OCI-LY7 (cell line): ENCODE measurements at regions of chr6 and their contacts with region 1.

Region 1: DNA sequence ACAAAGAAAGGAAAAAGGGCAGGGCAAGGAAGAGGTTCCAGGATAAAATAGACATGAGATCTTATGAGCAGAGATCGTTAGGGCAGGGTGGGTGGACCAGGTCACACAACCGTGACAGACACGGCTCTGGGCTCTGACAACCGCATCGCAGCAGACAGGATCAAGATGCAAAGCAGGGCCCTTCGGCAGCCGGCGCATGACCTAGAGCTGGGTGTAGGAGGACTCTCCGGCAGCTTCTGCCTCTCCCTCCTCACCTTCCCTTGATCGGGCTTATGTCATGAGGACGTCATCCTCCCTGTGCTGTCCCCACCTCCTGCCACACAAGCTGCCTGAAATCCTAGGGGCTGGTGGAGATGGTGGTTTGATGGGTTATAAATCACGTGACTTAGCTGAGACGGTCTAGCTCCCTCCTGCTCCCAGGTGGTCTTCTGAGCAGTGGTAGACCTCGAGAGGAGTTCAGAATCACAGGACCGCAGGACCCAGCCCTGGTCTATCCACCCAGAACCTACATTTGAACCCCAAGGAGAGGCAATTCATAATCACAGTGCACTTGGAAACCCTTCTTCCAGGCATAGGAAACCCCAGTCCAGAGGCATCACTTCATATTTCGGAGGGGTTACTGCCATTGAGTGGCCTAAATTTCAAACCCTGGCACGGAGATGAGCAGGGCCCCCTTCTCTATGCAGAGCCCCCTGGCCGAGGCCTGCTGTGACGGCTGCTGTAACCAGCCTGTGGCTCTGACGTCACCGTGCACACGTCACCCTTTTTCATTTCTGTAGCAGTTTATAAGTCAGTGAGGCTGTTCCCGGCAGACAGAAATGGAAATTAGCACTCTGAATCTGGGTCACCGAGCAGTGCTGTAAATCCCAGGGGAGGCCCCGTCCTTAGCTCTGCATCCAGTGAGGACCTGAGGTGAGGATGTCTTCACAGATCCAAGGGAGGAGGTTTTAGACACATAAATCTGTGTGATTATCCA is 8.7 kb upstream of the CCR6 start:
- DNase-seq: peak; percentile 96
- H3K4me3 ChIP-seq: peak overlapping the region; percentile 44
- H3K27ac ChIP-seq: peak overlapping the region; percentile 92
- H3K4me1 ChIP-seq: peaks cover 84% of the 10 kb centered on the region
- CTCF ChIP-seq: no peak

Region 2: DNA sequence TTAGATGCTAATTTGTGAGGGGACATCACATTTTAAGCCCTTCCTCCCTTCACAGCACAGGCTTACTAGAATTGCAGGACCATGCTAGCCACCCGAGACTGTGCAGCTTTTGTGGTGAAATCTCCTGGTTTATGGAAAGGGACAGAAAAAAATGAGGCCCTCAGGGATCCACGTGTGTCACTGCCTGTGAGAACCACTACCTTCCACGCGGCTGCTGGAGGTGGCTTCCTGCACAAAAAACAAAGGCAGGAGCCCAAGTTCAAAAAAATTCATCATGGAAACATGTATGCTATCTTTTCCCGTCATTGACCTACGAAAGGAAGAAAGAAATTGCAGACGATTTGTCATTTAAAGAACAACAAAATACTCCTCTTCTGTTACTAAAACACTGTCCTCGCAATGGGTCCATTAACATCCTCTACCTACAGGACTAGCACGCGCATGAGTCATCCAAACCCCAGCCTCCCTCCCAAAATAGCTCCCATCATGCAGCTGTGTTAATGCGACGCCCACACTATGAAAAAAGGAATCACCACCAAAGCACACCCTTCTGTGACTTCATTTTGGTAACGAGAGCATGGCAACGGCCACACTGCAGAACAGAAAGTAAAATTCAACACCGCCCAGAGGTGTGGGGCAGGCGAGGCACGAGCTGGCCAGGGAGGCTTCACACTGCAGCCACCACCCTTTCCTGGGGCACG is 573.4 kb before region 1 on chr6:
- CTCF ChIA-PET with region 1: no interaction called
- POLR2A ChIA-PET with region 1: no interaction called
- intact Hi-C with region 1: no loop called
- DNase-seq: no peak
- H3K4me3 ChIP-seq: no peak overlapping the region
- H3K27ac ChIP-seq: no peak overlapping the region
- H3K4me1 ChIP-seq: no peaks in the 10 kb centered on the region
- CTCF ChIP-seq: no peak

Region 3: DNA sequence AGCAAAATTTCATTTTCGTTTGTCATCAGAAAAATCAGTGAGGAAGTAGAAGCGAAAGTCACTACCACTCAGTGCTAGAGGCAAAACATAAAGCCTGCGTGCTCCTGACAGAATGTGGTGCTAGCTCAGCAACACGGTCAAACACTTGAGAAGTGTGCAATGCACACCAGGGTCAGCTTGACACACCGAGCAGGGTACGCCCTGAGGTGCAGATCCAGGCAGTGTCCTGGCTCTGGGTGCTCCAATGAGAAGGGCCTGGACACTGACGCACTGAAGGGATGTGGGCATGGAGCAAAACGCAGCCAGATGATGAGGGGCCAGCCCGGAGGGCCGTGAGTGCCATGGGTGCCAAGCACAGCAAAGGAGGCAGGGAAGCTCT is 163.8 kb before region 1 on chr6:
- CTCF ChIA-PET with region 1: interaction called, 3 read pairs
- POLR2A ChIA-PET with region 1: interaction called, 7 read pairs
- intact Hi-C with region 1: loop called (anchors 2 kb)
- DNase-seq: peak; percentile 66
- H3K4me3 ChIP-seq: peak overlapping the region; percentile 64
- H3K27ac ChIP-seq: peak overlapping the region; percentile 87
- H3K4me1 ChIP-seq: peaks cover 60% of the 10 kb centered on the region
- CTCF ChIP-seq: no peak

Region 4: GRCh38 chr6:166999145-166999883 is 114.9 kb before region 1 on chr6 and contains the start of gene CEP43:
- CTCF ChIA-PET with region 1: no interaction called
- POLR2A ChIA-PET with region 1: interaction called, 8 read pairs
- intact Hi-C with region 1: loop called (anchors 1 kb)
- DNase-seq: peak; percentile 96
- H3K4me3 ChIP-seq: peak within 1 kb of the TSS; percentile 95
- H3K27ac ChIP-seq: peak within 1 kb of the TSS; percentile 65
- H3K4me1 ChIP-seq: peaks cover 33% of the 10 kb centered on the region
- CTCF ChIP-seq: 0 out of 2 replicates have a peak, but pooled peaks have one; percentile 1
- total RNA-seq, gene CEP43: 41.2 and 48.1 TPM in 2 replicates

Region 5: DNA sequence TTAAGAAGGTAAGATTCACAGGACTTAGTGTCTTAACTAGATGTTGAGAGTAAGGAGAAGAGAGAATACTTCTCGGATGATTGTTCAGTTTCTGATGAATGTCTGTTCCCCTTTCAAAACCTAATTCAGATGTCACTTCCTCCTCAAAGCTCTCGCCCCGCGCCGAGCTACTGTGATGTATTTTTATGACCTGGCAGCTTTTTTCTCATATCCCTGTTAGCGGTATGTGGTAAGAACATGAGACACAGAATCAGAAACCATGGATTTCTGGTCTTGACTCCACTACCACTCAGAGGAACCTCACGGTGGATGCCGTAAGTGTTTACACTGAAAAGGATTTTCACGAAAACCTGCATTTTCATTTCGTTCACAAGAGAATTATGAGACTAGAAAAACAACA is 66.7 kb before region 1 on chr6:
- CTCF ChIA-PET with region 1: interaction called, 6 read pairs
- POLR2A ChIA-PET with region 1: interaction called, 16 read pairs
- intact Hi-C with region 1: loop called (anchors 1 kb)
- DNase-seq: peak; percentile 88
- H3K4me3 ChIP-seq: peak overlapping the region; percentile 60
- H3K27ac ChIP-seq: peak overlapping the region; percentile 94
- H3K4me1 ChIP-seq: peaks cover 74% of the 10 kb centered on the region
- CTCF ChIP-seq: no peak

Region 6: DNA sequence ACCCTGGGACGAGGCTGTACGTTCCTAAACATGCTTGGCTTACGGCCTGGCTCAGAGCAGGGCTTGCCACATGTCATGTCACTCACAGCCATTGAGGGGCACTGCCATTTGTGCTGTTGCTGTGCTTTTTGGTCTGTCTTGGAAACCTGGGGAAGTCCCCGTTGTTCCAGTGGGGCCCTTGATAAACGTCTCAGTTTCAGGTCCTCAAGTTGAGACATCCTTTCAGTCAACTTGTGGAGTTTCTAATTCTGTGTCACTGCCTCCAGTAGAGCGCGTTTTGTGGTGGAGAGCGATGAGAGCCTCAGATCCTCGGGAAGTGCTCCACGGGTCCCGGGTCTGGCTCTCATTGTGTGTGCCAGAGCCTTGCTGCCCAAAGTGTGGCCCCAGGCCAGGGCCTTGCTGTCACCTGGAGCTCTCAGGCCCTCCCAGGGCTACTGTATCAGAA is 34.3 kb before region 1 on chr6:
- CTCF ChIA-PET with region 1: no interaction called
- POLR2A ChIA-PET with region 1: no interaction called
- intact Hi-C with region 1: loop called (anchors 5 kb)
- DNase-seq: peak; percentile 87
- H3K4me3 ChIP-seq: peak overlapping the region; percentile 10
- H3K27ac ChIP-seq: peak overlapping the region; percentile 39
- H3K4me1 ChIP-seq: peaks cover 47% of the 10 kb centered on the region
- CTCF ChIP-seq: peak; percentile 82

Region 7: GRCh38 chr6:167093922-167094432 is 20.2 kb before region 1 on chr6:
- CTCF ChIA-PET with region 1: interaction called, 9 read pairs
- POLR2A ChIA-PET with region 1: interaction called, 96 read pairs
- intact Hi-C with region 1: loop called (anchors 1 kb)
- DNase-seq: no peak
- H3K4me3 ChIP-seq: peak overlapping the region; percentile 44
- H3K27ac ChIP-seq: peak overlapping the region; percentile 72
- H3K4me1 ChIP-seq: peaks cover 92% of the 10 kb centered on the region
- CTCF ChIP-seq: no peak

Region 8: GRCh38 chr6:167103041-167103891 is 11.0 kb before region 1 on chr6:
- CTCF ChIA-PET with region 1: interaction called, 3 read pairs
- POLR2A ChIA-PET with region 1: no interaction called
- intact Hi-C with region 1: loop called (anchors 1 kb)
- DNase-seq: peak; percentile 90
- H3K4me3 ChIP-seq: peak overlapping the region; percentile 44
- H3K27ac ChIP-seq: peak overlapping the region; percentile 87
- H3K4me1 ChIP-seq: peaks cover 69% of the 10 kb centered on the region
- CTCF ChIP-seq: no peak

Region 9: DNA sequence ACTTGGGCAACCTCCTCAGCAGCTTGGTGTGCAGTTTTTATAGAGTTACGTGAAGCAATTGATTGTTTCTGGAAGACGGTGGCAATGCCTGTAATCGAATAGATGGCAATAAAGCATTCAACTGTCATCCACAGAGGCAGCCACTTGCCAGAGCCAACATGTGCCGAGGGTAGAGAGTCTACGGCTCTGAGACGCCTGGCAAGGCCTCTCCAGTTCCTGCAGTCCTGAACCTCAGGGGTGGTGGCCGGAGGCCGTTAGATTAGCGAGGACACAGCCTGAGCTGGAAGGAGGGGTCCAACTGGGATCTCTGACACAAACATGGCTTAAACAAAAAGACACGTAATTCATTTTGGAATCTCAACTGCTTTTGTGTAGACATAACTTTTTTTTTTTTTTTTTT is 209.9 kb after region 1 on chr6:
- CTCF ChIA-PET with region 1: no interaction called
- POLR2A ChIA-PET with region 1: no interaction called
- intact Hi-C with region 1: no loop called
- DNase-seq: no peak
- H3K4me3 ChIP-seq: no peak overlapping the region
- H3K27ac ChIP-seq: no peak overlapping the region
- H3K4me1 ChIP-seq: no peaks in the 10 kb centered on the region
- CTCF ChIP-seq: no peak